ENCODE measurements at regions of chr10 and their contacts with region 1.

Region 1: DNA sequence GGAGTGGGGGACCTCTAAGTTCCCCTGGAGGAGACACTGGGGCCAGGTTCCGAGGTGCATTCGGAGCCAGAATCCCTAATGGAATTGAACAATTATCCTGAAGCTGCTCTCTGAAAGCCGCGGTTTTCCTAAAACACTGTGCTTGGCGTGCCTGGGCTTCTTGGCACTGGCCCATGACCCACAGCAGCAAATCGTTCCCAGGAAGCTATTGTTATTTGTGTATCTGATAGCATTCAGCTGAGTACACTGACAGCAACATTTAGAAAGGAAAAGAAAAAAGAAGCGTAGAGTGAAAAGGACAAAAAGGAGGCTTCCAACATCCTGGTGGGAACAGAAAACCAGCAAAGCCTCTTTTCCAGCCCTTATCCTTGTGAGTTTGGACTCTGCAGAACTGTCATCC is 339.8 kb downstream of the FRMD4A start:
- DNase-seq: peak in 2 of 5 donors; percentile 31
- ATAC-seq: peak; percentile 27 to 53 (median 40)
- H3K4me3 ChIP-seq: peak overlapping the region in 7 of 12 donors; percentile 3 to 39 (median 24)
- H3K27ac ChIP-seq: peak overlapping the region; percentile 59 to 89 (median 80)
- H3K4me1 ChIP-seq: peaks cover 0 to 60% (median 35%) of the 10 kb centered on the region in 12 donors
- H3K27me3 ChIP-seq: no peaks in the 10 kb centered on the region
- CTCF ChIP-seq: no peak
- POLR2A ChIP-seq: no peak

Region 2: GRCh38 chr10:13816195-13816926 is 174.6 kb before region 1 on chr10:
- intact Hi-C with region 1: loop called in 1 of 10 experiments (anchors 10 kb)
- DNase-seq: peak; percentile 74 to 89 (median 78)
- ATAC-seq: peak; percentile 85 to 91 (median 87)
- H3K4me3 ChIP-seq: no peak overlapping the region
- H3K27ac ChIP-seq: peak overlapping the region in 9 of 12 donors; percentile 0 to 58 (median 38)
- H3K4me1 ChIP-seq: peaks cover 5 to 35% (median 22%) of the 10 kb centered on the region in 12 donors
- H3K27me3 ChIP-seq: no peaks in the 10 kb centered on the region
- CTCF ChIP-seq: no peak
- POLR2A ChIP-seq: no peak

Region 3: GRCh38 chr10:14102056-14102455 is 111.1 kb after region 1 on chr10:
- intact Hi-C with region 1: no loop called
- DNase-seq: no peak
- ATAC-seq: no peak
- H3K4me3 ChIP-seq: no peak overlapping the region
- H3K27ac ChIP-seq: no peak overlapping the region
- H3K4me1 ChIP-seq: no peaks in the 10 kb centered on the region
- H3K27me3 ChIP-seq: peaks cover 0 to 2% (median 0%) of the 10 kb centered on the region in 9 donors
- CTCF ChIP-seq: no peak
- POLR2A ChIP-seq: no peak

Measured in heart left ventricle (tissue), 16 donors.